AG04449 (cell line): ENCODE measurements at regions of chr13 and their contacts with region 1.

Region 1: DNA sequence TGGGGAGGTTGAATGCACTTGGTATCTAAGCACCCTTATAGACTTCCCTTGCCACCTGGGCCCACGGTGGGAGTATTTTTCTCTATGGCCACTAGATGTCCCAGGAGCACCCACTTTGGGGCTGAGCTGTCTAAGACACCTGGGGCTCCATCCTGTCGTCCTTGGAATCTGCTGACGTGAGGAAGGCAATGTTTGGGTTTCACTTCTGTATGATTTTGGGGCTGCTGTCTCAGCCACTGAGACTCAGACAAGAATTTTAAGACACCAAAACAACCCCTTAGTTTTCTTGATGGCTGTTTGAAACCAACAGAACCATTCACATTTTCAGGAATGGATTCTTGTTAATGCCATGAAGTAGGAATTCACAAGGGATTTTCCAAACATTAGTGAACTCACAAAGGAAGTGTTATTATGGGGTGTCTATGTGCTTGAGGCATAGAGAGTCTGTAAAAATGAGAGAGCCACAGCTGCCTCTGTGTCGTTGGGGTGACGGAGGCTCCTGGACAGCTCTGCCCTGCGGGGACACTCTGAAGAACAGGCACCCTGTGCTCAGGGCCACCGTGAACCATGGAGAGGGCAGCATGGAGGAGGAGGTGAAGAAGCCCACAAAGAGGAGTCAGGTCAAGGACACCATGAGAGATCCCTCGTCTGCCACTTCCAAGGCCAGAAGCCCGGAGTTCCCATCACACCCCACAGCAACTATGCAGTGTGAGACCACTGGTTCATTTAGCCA is 106.8 kb upstream of the SPATA13 start:
- DNase-seq: no peak
- H3K4me3 ChIP-seq: no peak overlapping the region
- CTCF ChIP-seq: peak; percentile 74

Region 2: DNA sequence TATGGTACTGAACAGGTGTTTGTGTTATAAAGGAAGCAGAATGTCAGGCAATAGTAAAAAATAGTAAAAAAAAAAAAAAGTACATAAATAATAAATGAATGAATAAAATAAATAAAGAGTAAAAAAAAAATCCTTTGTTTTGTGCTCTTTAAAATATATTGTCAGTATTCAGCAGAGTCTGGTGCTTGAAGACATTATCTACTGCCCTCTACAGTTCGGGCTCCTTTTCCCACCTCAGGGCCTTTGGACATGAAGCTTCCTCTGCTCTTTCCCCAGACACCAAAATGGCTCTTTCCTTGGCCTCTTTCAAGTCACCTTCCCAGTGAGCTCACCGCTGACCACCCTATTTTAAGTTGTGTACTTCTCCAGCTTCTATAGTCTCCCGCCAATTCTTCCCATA is 346.0 kb before region 1 on chr13:
- CTCF ChIA-PET with region 1: no interaction called
- POLR2A ChIA-PET with region 1: no interaction called
- DNase-seq: no peak
- H3K4me3 ChIP-seq: no peak overlapping the region
- CTCF ChIP-seq: no peak

Region 3: DNA sequence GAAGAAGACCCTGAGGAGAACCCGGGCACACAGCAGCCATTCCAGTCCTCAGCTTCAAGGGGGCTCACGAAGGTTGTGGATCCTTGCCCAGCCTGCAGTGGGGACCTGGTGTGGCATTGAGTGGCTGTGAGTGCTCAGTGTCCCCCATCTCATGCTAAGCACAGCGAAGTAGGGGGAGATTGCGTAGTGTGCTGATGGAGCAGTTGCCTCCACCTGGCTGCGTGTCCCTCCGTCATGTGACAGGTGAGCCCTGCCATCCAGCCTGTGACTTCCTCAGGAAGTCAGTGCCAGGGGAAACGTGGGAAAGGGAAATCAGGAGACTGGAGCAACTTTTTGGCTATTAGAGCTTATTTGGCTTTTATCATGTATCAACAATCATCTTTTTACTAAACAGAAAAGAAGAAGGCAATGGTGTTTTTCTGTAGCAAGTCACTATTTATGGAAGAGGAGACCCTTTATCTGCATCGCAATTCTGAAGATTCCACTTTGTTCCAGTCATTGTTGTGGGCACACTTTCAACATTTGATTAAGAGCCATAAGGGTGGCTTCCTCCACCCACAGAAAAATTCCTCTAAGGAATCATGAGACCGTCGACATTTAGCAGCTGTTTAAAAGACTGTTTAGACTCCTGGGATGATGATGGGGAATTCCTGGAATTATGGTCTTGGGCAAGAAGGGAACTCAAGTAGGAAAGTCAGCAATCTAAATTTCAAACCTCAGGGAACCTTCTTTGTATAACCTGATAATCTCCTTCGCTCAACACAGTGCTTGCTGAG is 20.0 kb before region 1 on chr13:
- CTCF ChIA-PET with region 1: interaction called, 27 read pairs
- POLR2A ChIA-PET with region 1: no interaction called
- DNase-seq: peak; percentile 72
- H3K4me3 ChIP-seq: no peak overlapping the region
- CTCF ChIP-seq: no peak

Region 4: DNA sequence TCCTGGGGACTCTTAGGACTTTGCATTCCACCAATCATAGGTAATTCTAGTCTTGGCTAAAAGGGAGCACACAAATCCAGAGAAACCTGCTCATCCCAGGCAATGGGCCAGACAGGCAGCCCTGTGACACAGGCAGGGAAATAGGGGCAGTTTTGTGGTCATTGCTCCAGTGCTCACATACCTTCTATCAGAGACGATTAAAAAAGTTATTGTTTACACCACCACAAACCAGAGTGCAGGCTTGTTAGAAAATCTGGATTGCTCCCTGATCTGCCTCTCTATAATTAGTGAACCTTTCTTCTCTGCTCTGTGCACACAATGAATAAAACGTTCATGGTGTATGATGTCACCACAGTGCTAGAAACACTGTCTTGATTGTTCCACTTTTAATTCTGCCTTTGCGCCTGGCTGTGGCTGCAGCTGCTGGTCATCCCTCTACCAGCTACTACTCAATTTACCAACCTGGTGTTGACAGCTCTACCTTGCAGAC is 14.8 kb before region 1 on chr13:
- CTCF ChIA-PET with region 1: interaction called, 27 read pairs
- POLR2A ChIA-PET with region 1: no interaction called
- DNase-seq: no peak
- H3K4me3 ChIP-seq: no peak overlapping the region
- CTCF ChIP-seq: no peak

Region 5: GRCh38 chr13:24127038-24127643 is 73.5 kb after region 1 on chr13:
- CTCF ChIA-PET with region 1: no interaction called
- POLR2A ChIA-PET with region 1: no interaction called
- DNase-seq: no peak
- H3K4me3 ChIP-seq: no peak overlapping the region
- CTCF ChIP-seq: no peak